Caco-2 (cell line): ENCODE measurements at regions of chr1 and their contacts with region 1.

Region 1: GRCh38 chr1:208476340-208477041 is 232.3 kb upstream of the PLXNA2 start:
- DNase-seq: no peak
- H3K4me3 ChIP-seq: no peak overlapping the region
- H3K4me3 Mint-ChIP-seq: no peak overlapping the region
- H3K27ac Mint-ChIP-seq: no peak overlapping the region
- H3K4me1 ChIP-seq: no peaks in the 10 kb centered on the region
- H3K4me1 Mint-ChIP-seq: no peaks in the 10 kb centered on the region
- H3K27me3 ChIP-seq: no peaks in the 10 kb centered on the region
- H3K27me3 Mint-ChIP-seq: peaks cover 27% of the 10 kb centered on the region
- CTCF ChIP-seq: peak in 1 of 2 experiments; percentile 18

Region 2: DNA sequence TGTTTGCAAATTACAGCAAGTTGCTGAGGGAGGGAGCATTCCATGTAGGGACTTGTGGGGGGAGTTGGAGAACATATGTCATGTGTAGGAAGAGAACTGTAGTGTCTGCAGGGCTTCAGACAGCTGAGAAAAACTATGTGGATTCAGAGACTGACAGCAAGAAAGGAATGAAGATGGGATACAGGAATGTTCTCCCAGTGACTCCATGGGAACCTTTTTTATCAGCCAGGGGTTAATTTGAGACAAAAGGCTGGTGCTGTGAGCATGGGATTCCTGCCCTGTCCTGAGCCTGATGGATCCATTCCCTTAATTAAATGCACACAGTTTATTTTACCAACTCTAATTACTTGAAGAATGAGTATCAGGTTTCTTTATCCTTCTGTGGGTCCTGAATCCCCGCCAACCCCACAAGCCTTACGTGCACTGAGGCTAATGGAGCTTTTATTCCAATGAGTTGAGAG is 205.8 kb before region 1 on chr1:
- CTCF ChIA-PET with region 1: no interaction called
- POLR2A ChIA-PET with region 1: no interaction called
- intact Hi-C with region 1: loop called (anchors 10 kb)
- DNase-seq: no peak
- H3K4me3 ChIP-seq: no peak overlapping the region
- H3K4me3 Mint-ChIP-seq: no peak overlapping the region
- H3K27ac Mint-ChIP-seq: no peak overlapping the region
- H3K4me1 ChIP-seq: no peaks in the 10 kb centered on the region
- H3K4me1 Mint-ChIP-seq: no peaks in the 10 kb centered on the region
- H3K27me3 ChIP-seq: peaks cover 2% of the 10 kb centered on the region
- H3K27me3 Mint-ChIP-seq: peaks cover 34% of the 10 kb centered on the region
- CTCF ChIP-seq: no peak

Region 3: DNA sequence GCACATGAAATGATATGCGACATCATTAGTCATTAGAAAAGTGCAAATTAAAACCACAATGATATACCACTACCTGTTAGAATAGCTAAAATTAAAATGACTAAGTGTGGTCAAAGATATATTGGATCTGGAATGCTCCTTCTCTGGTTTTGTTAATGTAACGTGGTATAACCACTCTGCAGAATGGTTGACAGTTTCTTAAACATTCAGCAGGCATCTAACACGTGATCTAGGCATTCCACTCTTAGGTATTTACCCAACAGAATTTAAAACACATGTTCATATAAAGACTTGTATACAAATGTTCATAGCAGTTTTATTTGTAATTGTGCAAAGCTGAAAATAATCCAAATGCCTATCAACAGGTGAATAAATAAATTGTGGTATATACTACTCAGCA is 67.3 kb before region 1 on chr1:
- CTCF ChIA-PET with region 1: no interaction called
- POLR2A ChIA-PET with region 1: no interaction called
- intact Hi-C with region 1: no loop called
- DNase-seq: no peak
- H3K4me3 ChIP-seq: no peak overlapping the region
- H3K4me3 Mint-ChIP-seq: no peak overlapping the region
- H3K27ac Mint-ChIP-seq: no peak overlapping the region
- H3K4me1 ChIP-seq: no peaks in the 10 kb centered on the region
- H3K4me1 Mint-ChIP-seq: no peaks in the 10 kb centered on the region
- H3K27me3 ChIP-seq: no peaks in the 10 kb centered on the region
- H3K27me3 Mint-ChIP-seq: peaks cover 5% of the 10 kb centered on the region
- CTCF ChIP-seq: no peak